ENCODE measurements at regions of chr11 and their contacts with region 1.

Region 1: GRCh38 chr11:56910785-56911184 is 77.9 kb upstream of the OR5AK2 start:
- DNase-seq: peak; percentile 49 to 78
- ATAC-seq: peak; percentile 66 to 72
- H3K4me3 ChIP-seq: peak overlapping the region; percentile 13; the same call in 1 of the 3 replicates
- H3K27ac ChIP-seq: peak overlapping the region; percentile 95 to 100
- H3K4me1 ChIP-seq: peaks cover 48% of the 10 kb centered on the region
- CTCF ChIP-seq: no peak
- EP300 ChIP-seq: no peak
- POLR2A ChIP-seq: no peak
- RAD21 ChIP-seq: peak in 1 of 2 experiments; percentile 28; a peak in 2 of 5 replicates

Region 2: GRCh38 chr11:56846631-56847576 is 63.9 kb before region 1 on chr11:
- CTCF ChIA-PET with region 1: interaction called, 26 read pairs
- POLR2A ChIA-PET with region 1: interaction called, 17 read pairs
- DNase-seq: no peak
- ATAC-seq: peak in 1 of 2 experiments; percentile 14; a peak in 2 of 6 replicates
- H3K4me3 ChIP-seq: no peak overlapping the region
- H3K27ac ChIP-seq: peak overlapping the region; percentile 88 to 94
- H3K4me1 ChIP-seq: peaks cover 43% of the 10 kb centered on the region
- CTCF ChIP-seq: no peak
- EP300 ChIP-seq: no peak
- POLR2A ChIP-seq: no peak
- RAD21 ChIP-seq: no peak

Region 3: GRCh38 chr11:56950510-56950909 is 39.7 kb after region 1 on chr11:
- CTCF ChIA-PET with region 1: no interaction called
- POLR2A ChIA-PET with region 1: no interaction called
- DNase-seq: no peak
- ATAC-seq: no peak
- H3K4me3 ChIP-seq: no peak overlapping the region
- H3K27ac ChIP-seq: peak overlapping the region in 1 of 2 experiments; percentile 27; a peak in 1 of 6 replicates
- H3K4me1 ChIP-seq: peaks cover 12% of the 10 kb centered on the region; the same call in 2 of the 3 replicates
- CTCF ChIP-seq: no peak
- EP300 ChIP-seq: no peak
- POLR2A ChIP-seq: no peak
- RAD21 ChIP-seq: no peak

Region 4: DNA sequence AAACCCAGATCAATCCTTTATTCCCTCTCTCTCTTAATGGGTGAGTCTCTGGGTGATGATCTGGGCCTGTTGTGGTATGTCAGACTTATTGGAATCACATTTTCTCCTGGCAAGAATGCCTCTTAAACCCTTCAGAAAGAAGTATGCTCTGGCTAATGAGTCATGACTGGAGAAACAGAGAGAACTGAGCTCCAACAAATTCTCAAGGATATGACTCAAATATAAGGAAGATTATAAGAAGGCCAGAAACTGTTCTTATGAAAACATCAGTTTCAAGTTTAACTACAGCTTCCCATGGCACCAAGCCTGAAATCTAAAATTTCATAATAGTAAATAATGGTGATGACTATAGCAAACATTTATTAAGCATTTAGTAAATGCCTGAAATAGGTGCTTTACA is 161.9 kb after region 1 on chr11:
- CTCF ChIA-PET with region 1: interaction called, 3 read pairs
- POLR2A ChIA-PET with region 1: interaction called, 13 read pairs
- DNase-seq: peak; percentile 78 to 93
- ATAC-seq: peak; percentile 95 to 97
- H3K4me3 ChIP-seq: no peak overlapping the region
- H3K27ac ChIP-seq: peak overlapping the region; percentile 90 to 91
- H3K4me1 ChIP-seq: peaks cover 30% of the 10 kb centered on the region
- CTCF ChIP-seq: no peak
- EP300 ChIP-seq: peak; percentile 84 to 91
- POLR2A ChIP-seq: no peak
- RAD21 ChIP-seq: peak; percentile 25 to 67; a peak in 4 of 5 replicates

Region 5: DNA sequence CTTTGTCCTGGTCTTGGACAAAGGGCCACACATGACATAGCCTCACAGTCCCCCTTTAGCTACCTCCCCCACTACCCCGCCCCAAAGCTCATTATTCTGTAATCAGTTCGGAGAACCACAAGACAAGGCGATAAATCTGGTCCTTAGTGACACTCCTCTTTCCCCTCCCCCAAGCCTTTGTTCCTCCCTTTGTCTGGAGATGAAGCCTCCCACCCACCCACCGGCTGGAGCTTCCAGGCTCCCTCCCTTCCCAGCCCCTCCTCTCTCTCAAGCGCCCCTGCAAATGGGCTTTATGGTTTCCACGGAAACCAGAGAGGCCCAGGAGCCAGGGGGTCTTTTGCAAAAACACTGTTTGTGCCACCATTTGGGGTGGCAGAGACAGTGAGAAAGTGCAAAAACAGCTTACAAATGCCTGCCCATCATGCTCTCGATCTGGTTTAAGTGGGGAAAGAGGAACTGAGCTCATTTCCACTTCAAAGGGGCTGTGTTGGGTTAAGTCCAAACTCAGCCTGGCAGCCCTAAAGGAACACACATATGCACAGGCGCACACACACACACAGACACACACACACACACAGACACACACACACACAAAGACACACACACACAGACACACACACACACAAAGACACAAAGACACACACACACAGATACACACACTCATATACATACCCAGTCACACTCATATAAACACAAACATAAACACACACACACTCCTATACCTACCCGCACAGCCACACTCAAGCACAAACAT is 302.7 kb after region 1 on chr11:
- CTCF ChIA-PET with region 1: no interaction called
- POLR2A ChIA-PET with region 1: no interaction called
- DNase-seq: no peak
- ATAC-seq: no peak
- H3K4me3 ChIP-seq: no peak overlapping the region
- H3K27ac ChIP-seq: peak overlapping the region in 1 of 2 experiments; percentile 67; a peak in 4 of 6 replicates
- H3K4me1 ChIP-seq: peaks cover 14% of the 10 kb centered on the region
- CTCF ChIP-seq: no peak
- EP300 ChIP-seq: no peak
- POLR2A ChIP-seq: no peak
- RAD21 ChIP-seq: no peak

Measured in A549 (cell line).